Activated B cell treated with CpG ODN at 0.5 μM for 24 hours (primary cell): ENCODE measurements at regions of chr9 and their contacts with region 1.

Region 1: GRCh38 chr9:4984621-4985385 is at the start of gene JAK2:
- DNase-seq: peak; percentile 83
- ATAC-seq: peak; percentile 80
- H3K4me3 Mint-ChIP-seq: peak within 1 kb of the TSS; percentile 87
- H3K27ac Mint-ChIP-seq: peak within 1 kb of the TSS; percentile 95
- H3K4me1 Mint-ChIP-seq: peaks cover 48% of the 10 kb centered on the region
- H3K27me3 Mint-ChIP-seq: no peaks in the 10 kb centered on the region
- CTCF ChIP-seq: no peak
- total RNA-seq, gene JAK2: 19.2 and 21.3 TPM in 2 replicates

Region 2: DNA sequence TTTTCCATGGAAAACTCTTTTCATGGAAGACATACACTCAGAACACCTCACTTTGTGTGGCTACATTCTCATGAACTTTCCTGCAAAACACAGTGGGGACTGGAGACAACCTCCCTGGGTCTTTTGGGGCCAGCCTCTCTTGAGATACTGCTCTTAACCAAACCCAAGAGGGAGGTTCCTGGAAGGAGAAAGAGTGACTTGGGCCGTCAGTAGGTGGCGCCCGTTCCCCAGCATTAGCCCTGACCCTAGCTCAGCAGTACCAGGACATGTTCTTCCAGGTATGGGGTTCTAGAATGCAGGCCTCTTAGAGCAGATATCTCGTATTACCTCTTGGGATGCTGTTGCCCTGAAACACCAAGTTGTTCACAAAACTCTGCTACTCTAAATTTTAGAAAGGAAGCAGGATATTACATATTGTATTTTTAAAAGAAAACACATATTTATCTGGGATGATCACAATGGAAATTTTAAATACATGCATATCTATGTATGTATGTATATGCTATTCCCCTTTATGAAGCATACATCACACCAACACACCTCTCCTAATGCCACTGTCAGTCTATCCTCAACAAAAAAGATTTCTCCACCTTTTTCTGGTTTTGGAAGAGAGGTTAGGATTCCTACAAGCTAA is 669.1 kb before region 1 on chr9:
- CTCF ChIA-PET with region 1: no interaction called
- POLR2A ChIA-PET with region 1: no interaction called
- intact Hi-C with region 1: loop called (anchors 10 kb)
- DNase-seq: peak; percentile 36
- ATAC-seq: peak; percentile 54
- H3K4me3 Mint-ChIP-seq: no peak overlapping the region
- H3K27ac Mint-ChIP-seq: no peak overlapping the region
- H3K4me1 Mint-ChIP-seq: no peaks in the 10 kb centered on the region
- H3K27me3 Mint-ChIP-seq: peaks cover 8% of the 10 kb centered on the region
- CTCF ChIP-seq: peak; percentile 47

Region 3: DNA sequence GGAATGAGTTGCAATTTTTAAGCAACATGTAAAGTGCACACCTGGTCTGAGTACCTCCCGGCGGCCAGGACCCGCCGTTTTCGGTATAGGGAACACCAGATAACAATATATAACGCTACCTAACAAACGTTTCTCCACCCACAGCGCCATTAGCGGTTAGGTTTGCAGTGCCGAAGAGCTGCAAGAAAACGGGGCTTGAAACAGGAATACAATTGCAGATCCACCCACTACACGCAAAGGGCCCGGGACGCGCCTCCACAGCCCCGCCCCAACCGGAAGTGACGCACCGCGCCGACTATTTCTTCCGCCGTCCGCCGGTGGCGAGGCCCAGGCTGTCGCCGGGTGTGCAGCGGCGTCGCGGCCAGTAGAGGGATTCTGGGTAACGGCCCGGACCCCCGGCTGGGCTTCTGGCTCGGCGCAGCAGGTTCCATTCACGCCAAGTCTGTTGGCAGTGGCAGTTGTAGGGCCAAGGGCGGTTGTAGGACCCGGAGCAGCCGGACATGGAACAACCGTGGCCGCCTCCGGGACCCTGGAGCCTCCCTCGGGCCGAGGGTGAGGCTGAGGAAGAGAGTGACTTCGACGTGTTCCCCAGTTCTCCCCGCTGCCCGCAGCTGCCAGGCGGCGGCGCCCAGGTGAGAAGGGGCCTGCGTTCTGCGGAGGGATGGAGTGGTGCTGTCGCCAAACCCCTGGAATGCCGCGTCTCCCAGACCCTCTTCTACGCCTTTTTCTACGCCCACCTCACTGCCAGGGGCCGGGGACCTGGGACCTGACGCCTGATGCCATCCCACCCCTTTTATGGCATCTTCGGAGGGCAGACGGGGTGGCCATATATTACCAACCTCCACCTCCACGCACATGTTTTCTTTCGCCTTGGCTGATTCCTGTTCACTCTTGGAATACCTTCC is 305.3 kb before region 1 on chr9 and contains the start of gene CDC37L1:
- CTCF ChIA-PET with region 1: interaction called, 3 read pairs
- POLR2A ChIA-PET with region 1: interaction called, 4 read pairs
- intact Hi-C with region 1: loop called (anchors 1 kb)
- DNase-seq: peak; percentile 100
- ATAC-seq: peak; percentile 95
- H3K4me3 Mint-ChIP-seq: no peak within 1 kb of the TSS
- H3K27ac Mint-ChIP-seq: no peak within 1 kb of the TSS
- H3K4me1 Mint-ChIP-seq: peaks cover 7% of the 10 kb centered on the region
- H3K27me3 Mint-ChIP-seq: no peaks in the 10 kb centered on the region
- CTCF ChIP-seq: no peak
- total RNA-seq, gene CDC37L1: 12.3 and 14.7 TPM in 2 replicates

Region 4: GRCh38 chr9:4849364-4849763 is 135.4 kb before region 1 on chr9:
- CTCF ChIA-PET with region 1: no interaction called
- POLR2A ChIA-PET with region 1: no interaction called
- intact Hi-C with region 1: loop called (anchors 1 kb)
- DNase-seq: no peak
- ATAC-seq: no peak
- H3K4me3 Mint-ChIP-seq: no peak overlapping the region
- H3K27ac Mint-ChIP-seq: no peak overlapping the region
- H3K4me1 Mint-ChIP-seq: no peaks in the 10 kb centered on the region
- H3K27me3 Mint-ChIP-seq: no peaks in the 10 kb centered on the region
- CTCF ChIP-seq: no peak

Region 5: DNA sequence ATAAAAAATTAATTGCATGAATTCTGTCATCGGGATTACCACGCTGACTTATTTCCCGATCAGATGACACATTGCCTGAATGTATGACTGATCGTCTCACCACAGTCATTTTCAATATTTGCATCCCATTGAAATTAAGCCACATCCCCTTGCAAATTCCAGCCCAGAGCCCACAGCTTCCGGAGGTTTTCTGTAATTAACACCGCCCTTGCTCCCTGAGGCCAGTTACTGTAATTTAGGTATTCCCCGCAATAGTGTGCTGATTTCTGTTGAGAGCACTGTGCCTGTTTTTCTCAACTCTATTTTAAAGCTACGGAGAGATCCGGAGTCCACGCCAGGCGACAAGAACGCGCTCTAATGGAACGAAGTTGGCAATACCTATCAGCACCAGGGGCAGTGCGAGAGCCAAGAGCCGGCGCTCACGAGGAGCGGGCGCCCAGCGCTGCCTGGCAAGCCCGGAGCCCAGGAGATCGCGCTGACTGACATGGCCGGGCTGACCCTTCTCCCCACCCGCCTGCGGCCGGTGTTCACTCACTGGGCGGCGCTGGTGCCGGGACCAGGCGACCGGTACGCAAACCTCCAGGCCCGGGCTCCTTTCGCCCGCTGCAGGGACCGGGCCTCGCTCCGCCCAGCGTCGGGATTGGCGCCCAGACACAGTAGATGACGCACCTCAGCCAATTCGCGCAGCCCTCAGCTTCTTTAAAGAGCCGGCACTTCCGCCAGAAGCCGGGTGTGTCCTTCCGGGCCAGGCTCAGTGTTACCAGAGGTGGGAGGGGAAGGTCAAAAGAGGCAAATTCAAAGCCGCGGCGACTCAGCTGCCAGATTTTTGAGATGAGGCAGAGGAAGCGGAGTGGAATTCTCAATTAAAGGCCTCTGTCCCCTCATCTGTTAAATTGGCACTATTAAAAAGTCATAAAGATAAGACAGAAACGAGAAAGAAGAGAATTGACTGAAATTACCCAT is 452.7 kb after region 1 on chr9 and contains the start of gene PLGRKT:
- CTCF ChIA-PET with region 1: interaction called, 3 read pairs
- POLR2A ChIA-PET with region 1: interaction called, 12 read pairs
- intact Hi-C with region 1: loop called (anchors 5 kb)
- DNase-seq: peak; percentile 82
- ATAC-seq: peak; percentile 78
- H3K4me3 Mint-ChIP-seq: peak within 1 kb of the TSS; percentile 96
- H3K27ac Mint-ChIP-seq: peak within 1 kb of the TSS; percentile 100
- H3K4me1 Mint-ChIP-seq: peaks cover 59% of the 10 kb centered on the region
- H3K27me3 Mint-ChIP-seq: no peaks in the 10 kb centered on the region
- CTCF ChIP-seq: no peak
- total RNA-seq, gene PLGRKT: 57.1 and 59.7 TPM in 2 replicates

Region 6: GRCh38 chr9:6412487-6413364 is 1427.9 kb after region 1 on chr9 and contains the start of gene UHRF2:
- CTCF ChIA-PET with region 1: no interaction called
- POLR2A ChIA-PET with region 1: no interaction called
- intact Hi-C with region 1: loop called (anchors 10 kb)
- DNase-seq: peak; percentile 95
- ATAC-seq: peak; percentile 87
- H3K4me3 Mint-ChIP-seq: peak within 1 kb of the TSS; percentile 82
- H3K27ac Mint-ChIP-seq: peak within 1 kb of the TSS; percentile 96
- H3K4me1 Mint-ChIP-seq: peaks cover 61% of the 10 kb centered on the region
- H3K27me3 Mint-ChIP-seq: no peaks in the 10 kb centered on the region
- CTCF ChIP-seq: no peak
- total RNA-seq, gene UHRF2: 81.1 and 114 TPM in 2 replicates